IMR-90 (cell line): ENCODE measurements at regions of chr16 and their contacts with region 1.

Region 1: DNA sequence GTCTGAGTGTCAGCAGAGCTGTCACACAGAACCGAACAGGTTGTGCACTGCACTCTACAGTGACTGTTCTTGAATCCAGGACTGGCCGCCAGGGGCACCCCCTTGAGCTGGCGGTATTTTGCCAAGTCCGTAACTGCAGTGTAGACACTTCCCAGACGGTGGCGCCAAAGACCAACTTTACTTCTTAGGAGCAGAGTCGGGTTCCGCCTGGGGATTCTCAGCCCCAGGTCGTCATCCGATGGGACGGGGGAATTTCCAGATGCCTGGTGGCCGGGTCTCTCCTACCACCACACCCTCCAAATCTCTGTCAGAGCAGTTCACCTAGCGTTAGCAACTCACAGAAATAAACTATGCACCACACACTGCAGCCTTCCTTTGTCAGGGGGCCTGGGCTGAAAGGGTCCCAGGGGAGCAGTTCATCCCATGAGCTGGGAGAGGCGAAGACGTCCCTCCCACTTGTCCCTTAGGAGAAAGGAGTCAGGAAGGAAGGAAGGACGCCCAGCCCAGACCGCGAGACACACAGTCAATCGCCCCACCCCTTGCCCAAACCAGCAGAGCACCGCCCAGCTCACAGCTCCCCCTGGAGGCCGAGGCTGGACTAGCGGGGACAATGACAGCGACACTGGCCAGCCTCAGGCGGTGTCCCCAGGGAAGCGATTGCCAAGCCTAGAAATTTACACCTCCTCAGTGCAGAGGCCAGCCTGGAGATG is 7.4 kb upstream of the RIPOR1 start:
- DNase-seq: peak; percentile 94
- ATAC-seq: peak; percentile 95
- H3K4me3 ChIP-seq: peak overlapping the region; percentile 45
- H3K27ac ChIP-seq: peak overlapping the region; percentile 76
- H3K4me1 ChIP-seq: peaks cover 3% of the 10 kb centered on the region
- H3K27me3 ChIP-seq: no peaks in the 10 kb centered on the region
- CTCF ChIP-seq: peak; percentile 100
- POLR2A ChIP-seq: peak; percentile 52
- RAD21 ChIP-seq: peak; percentile 94

Region 2: GRCh38 chr16:67246934-67247697 is 274.1 kb before region 1 on chr16 and contains the start of gene FHOD1:
- CTCF ChIA-PET with region 1: no interaction called
- POLR2A ChIA-PET with region 1: no interaction called
- dilution Hi-C with region 1: no loop called
- in situ Hi-C with region 1: no loop called
- intact Hi-C with region 1: no loop called
- DNase-seq: peak; percentile 92
- ATAC-seq: peak; percentile 75
- H3K4me3 ChIP-seq: peak within 1 kb of the TSS; percentile 89
- H3K27ac ChIP-seq: peak within 1 kb of the TSS; percentile 88
- H3K4me1 ChIP-seq: peaks cover 43% of the 10 kb centered on the region
- H3K27me3 ChIP-seq: no peaks in the 10 kb centered on the region
- CTCF ChIP-seq: no peak
- POLR2A ChIP-seq: peak; percentile 89
- RAD21 ChIP-seq: no peak
- total RNA-seq, gene FHOD1: 13.1 and 13.8 TPM in 2 replicates

Region 3: DNA sequence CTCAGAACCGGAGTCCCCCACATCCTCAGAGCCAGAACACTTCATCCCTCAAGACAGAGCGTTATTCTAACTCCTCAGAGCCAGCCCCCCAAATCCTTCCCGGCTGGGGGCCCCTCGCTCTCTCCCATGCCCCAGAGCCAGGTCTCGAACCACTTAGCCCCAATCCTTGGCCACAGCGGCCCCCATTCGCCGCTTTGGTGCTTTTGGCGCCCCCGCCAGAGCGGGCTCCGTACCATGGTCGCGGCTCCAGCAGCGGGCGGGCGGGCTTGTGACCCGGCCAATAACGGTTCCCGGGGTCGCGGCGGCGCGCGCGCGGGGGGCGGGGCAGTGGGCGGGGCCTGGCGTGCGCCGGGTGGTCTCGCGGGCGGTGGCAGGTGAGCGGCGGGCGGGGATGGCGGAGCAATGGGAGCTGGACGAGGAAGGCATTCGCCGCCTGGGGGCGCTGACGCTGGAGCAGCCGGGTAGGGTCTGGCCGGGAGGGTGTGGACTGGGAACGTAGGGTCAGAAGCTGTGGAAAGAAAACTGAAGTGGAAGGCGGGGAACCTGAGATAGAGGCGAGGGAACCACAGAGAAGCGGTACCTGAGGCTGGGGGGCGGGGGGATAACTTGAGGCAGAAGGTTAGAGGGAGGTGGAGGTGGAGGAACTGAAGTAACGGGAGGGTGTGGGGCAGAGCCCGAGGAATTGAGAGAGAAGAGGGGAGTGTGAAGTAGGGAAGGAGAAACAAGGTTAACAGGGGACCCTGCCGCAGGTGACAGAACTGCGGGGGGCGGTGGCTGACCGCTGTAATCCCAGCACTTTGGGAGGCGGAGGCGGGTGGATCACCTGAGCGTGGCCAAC is 194.6 kb before region 1 on chr16 and contains the starts of genes KCTD19 and LRRC36:
- CTCF ChIA-PET with region 1: no interaction called
- POLR2A ChIA-PET with region 1: no interaction called
- dilution Hi-C with region 1: no loop called
- in situ Hi-C with region 1: no loop called
- intact Hi-C with region 1: no loop called
- DNase-seq: no peak
- ATAC-seq: peak; percentile 69
- H3K4me3 ChIP-seq: peak within 1 kb of the TSS; percentile 45
- H3K27ac ChIP-seq: no peak within 1 kb of the TSS
- H3K4me1 ChIP-seq: no peaks in the 10 kb centered on the region
- H3K27me3 ChIP-seq: peaks cover 4% of the 10 kb centered on the region; the same call in 1 of the 2 replicates
- CTCF ChIP-seq: peak; percentile 45
- POLR2A ChIP-seq: no peak
- RAD21 ChIP-seq: peak; percentile 21; the same call in 1 of the 2 replicates
- total RNA-seq, gene KCTD19: under 0.01 TPM in 1 of 2 replicates, not detected in the other
- total RNA-seq, gene LRRC36: 0.18 TPM in 1 of 2 replicates, not detected in the other

Region 4: GRCh38 chr16:67356396-67356795 is 164.9 kb before region 1 on chr16:
- CTCF ChIA-PET with region 1: no interaction called
- POLR2A ChIA-PET with region 1: no interaction called
- dilution Hi-C with region 1: no loop called
- in situ Hi-C with region 1: no loop called
- intact Hi-C with region 1: no loop called
- DNase-seq: no peak
- ATAC-seq: no peak
- H3K4me3 ChIP-seq: no peak overlapping the region
- H3K27ac ChIP-seq: no peak overlapping the region
- H3K4me1 ChIP-seq: no peaks in the 10 kb centered on the region
- H3K27me3 ChIP-seq: peaks cover 29% of the 10 kb centered on the region
- CTCF ChIP-seq: no peak
- POLR2A ChIP-seq: no peak
- RAD21 ChIP-seq: no peak

Region 5: GRCh38 chr16:67480833-67481560 is 40.3 kb before region 1 on chr16 and contains the start of gene ATP6V0D1:
- CTCF ChIA-PET with region 1: interaction called, 14 read pairs
- POLR2A ChIA-PET with region 1: no interaction called
- dilution Hi-C with region 1: no loop called
- in situ Hi-C with region 1: no loop called
- intact Hi-C with region 1: no loop called
- DNase-seq: peak; percentile 97
- ATAC-seq: peak; percentile 96
- H3K4me3 ChIP-seq: peak within 1 kb of the TSS; percentile 81
- H3K27ac ChIP-seq: peak within 1 kb of the TSS; percentile 82
- H3K4me1 ChIP-seq: peaks cover 14% of the 10 kb centered on the region
- H3K27me3 ChIP-seq: no peaks in the 10 kb centered on the region
- CTCF ChIP-seq: peak; percentile 98
- POLR2A ChIP-seq: peak; percentile 93
- RAD21 ChIP-seq: peak; percentile 69
- total RNA-seq, gene ATP6V0D1: 112 and 128 TPM in 2 replicates

Region 6: DNA sequence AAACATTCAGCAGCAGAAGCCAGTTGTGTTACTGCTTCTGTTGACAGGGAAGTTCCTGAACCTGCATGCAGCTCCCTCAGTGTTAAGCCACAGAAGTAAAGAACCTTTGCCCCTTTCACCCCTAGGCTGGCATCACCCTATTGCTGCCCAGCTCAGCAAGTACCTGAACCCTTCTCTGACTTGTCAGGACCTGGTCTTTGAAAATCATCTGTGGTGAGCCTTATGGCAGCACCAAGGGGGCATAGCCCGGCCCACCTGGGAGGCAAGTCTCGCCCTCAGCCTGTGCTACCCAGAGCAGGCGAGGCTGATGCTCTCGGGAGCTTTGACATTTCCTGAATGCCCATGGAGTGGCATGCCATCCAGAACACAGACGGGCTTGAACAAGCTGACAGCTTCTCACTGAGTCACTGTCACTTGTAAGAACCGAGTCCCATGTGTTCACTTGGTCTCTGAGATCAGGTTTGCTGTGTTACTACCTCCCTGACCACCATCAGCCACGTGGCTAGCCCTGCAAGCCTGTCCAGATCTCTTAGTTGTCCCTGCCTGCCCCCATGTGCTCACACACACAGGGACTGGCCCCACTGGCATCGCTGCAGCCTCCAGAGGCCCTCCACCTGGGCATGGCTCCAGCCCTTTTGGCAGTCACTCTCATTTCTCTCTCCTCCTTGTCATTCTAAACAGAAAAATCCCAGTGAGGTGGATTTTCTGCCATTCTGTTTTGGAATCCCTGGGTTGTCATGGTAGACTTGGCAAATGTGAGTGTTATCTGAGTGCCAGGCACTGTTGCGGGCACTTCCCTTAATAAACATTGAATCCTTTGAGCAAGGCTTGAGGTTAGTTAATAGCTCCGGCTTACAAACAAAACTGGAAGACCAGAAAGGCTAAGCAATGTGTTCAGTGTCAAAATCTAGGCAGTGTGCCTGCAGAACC is 120.8 kb after region 1 on chr16:
- CTCF ChIA-PET with region 1: interaction called, 9 read pairs
- POLR2A ChIA-PET with region 1: no interaction called
- dilution Hi-C with region 1: no loop called
- in situ Hi-C with region 1: no loop called
- intact Hi-C with region 1: loop called (anchors 1 kb)
- DNase-seq: peak; percentile 33
- ATAC-seq: peak; percentile 66
- H3K4me3 ChIP-seq: no peak overlapping the region
- H3K27ac ChIP-seq: no peak overlapping the region
- H3K4me1 ChIP-seq: peaks cover 5% of the 10 kb centered on the region; the same call in 1 of the 2 replicates
- H3K27me3 ChIP-seq: peaks cover 27% of the 10 kb centered on the region
- CTCF ChIP-seq: no peak
- POLR2A ChIP-seq: no peak
- RAD21 ChIP-seq: no peak

Region 7: GRCh38 chr16:67667817-67668494 is 146.7 kb after region 1 on chr16:
- CTCF ChIA-PET with region 1: interaction called, 20 read pairs
- POLR2A ChIA-PET with region 1: no interaction called
- dilution Hi-C with region 1: no loop called
- in situ Hi-C with region 1: loop called (anchors 10 kb)
- intact Hi-C with region 1: loop called (anchors 1 kb)
- DNase-seq: peak; percentile 89
- ATAC-seq: peak; percentile 92
- H3K4me3 ChIP-seq: no peak overlapping the region
- H3K27ac ChIP-seq: no peak overlapping the region; the same call in 1 of the 2 replicates
- H3K4me1 ChIP-seq: peaks cover 12% of the 10 kb centered on the region
- H3K27me3 ChIP-seq: no peaks in the 10 kb centered on the region
- CTCF ChIP-seq: peak; percentile 97
- POLR2A ChIP-seq: no peak
- RAD21 ChIP-seq: peak; percentile 83

Region 8: DNA sequence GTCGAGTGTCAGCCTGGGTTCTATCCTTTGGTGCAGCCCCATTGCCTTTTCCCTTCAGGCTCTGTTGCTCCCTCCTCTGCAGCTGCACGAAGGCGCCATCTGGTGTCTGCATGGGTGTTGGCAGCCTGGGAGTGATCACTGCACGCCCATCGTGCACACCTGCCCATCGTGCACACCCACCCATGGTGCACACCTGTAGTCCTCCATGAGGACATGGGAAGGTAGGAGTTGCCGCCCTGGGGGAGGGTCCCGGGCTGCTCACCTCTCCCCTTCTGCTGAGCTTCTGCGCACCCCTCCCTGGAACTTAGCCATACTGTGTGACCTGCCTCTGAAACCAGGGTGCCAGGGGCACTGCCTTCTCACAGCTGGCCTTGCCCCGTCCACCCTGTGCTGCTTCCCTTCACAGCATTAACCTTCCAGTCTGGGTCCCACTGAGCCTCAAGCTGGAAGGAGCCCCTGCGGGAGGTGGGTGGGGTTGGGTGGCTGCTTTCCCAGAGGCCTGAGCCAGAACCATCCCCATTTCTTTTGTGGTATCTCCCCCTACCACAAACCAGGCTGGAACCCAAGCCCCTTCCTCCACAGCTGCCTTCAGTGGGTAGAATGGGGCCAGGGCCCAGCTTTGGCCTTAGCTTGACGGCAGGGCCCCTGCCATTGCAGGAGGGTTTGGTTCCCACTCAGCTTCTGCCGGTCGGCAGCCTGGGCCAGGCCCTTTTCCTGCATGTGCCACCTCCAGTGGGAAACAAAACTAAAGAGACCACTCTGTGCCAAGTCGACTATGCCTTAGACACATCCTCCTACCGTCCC is 407.5 kb after region 1 on chr16:
- CTCF ChIA-PET with region 1: interaction called, 3 read pairs
- POLR2A ChIA-PET with region 1: no interaction called
- dilution Hi-C with region 1: no loop called
- in situ Hi-C with region 1: loop called (anchors 25 kb)
- intact Hi-C with region 1: loop called (anchors 1 kb)
- DNase-seq: peak; percentile 43
- ATAC-seq: peak; percentile 92
- H3K4me3 ChIP-seq: no peak overlapping the region
- H3K27ac ChIP-seq: no peak overlapping the region
- H3K4me1 ChIP-seq: no peaks in the 10 kb centered on the region
- H3K27me3 ChIP-seq: no peaks in the 10 kb centered on the region
- CTCF ChIP-seq: peak; percentile 87
- POLR2A ChIP-seq: no peak
- RAD21 ChIP-seq: peak; percentile 94

Region 9: GRCh38 chr16:68417711-68418301 is 896.6 kb after region 1 on chr16:
- CTCF ChIA-PET with region 1: no interaction called
- POLR2A ChIA-PET with region 1: no interaction called
- dilution Hi-C with region 1: no loop called
- in situ Hi-C with region 1: no loop called
- intact Hi-C with region 1: no loop called
- DNase-seq: no peak
- ATAC-seq: no peak
- H3K4me3 ChIP-seq: no peak overlapping the region
- H3K27ac ChIP-seq: no peak overlapping the region
- H3K4me1 ChIP-seq: no peaks in the 10 kb centered on the region
- H3K27me3 ChIP-seq: peaks cover 65% of the 10 kb centered on the region
- CTCF ChIP-seq: no peak
- POLR2A ChIP-seq: no peak
- RAD21 ChIP-seq: no peak